Activated CD4-positive, alpha-beta T cell treated with anti-CD3 and anti-CD28 coated beads for 36 hours (primary cell): ENCODE measurements at regions of chr22 and their contacts with region 1.

Region 1: DNA sequence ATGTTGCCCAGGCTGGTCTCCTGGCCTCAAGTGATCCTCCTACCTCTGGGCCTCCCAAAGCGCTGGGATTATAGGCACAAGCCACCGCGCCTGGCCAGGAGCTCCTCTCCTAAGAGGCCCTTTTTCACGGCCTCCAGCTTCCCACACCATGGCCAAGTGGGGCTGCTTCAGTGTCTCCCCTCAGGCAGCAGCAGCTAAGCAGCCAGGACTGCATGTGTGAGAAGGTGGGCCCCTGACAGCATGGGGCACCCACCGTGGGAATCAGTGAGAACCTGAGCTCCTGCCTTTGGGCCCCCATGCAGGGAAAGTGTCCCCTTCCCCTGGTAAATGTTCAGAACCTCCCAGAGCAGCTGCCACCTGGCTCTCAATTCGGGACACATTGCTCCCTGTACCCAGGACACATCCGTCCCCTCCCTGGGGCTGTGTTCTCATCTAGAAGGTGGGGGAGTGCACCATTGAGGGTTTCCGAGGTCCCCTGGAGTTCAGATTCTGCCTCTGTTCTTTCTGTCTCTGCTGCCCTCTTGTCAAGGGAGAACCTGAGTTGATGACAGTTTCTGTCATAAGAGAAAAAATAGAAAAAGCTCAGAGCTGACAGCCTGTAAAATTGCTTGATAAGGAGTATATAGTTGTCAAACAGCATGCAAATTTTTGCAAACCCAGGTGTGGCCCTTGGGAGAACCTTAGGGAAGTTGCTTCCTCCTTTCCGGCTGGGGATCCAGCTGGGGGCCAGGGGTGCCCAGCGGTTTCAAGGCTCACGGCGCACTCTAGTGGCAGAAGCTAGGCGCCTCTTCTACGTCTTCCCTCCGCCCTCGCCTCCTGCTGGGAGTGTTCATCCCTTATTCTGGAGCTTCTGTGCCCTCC is 29.7 kb downstream of the FAM83F start:
- DNase-seq: peak; percentile 82
- ATAC-seq: peak; percentile 85
- H3K4me3 Mint-ChIP-seq: no peak overlapping the region
- H3K27ac Mint-ChIP-seq: no peak overlapping the region
- H3K4me1 Mint-ChIP-seq: no peaks in the 10 kb centered on the region
- H3K27me3 Mint-ChIP-seq: no peaks in the 10 kb centered on the region

Region 2: GRCh38 chr22:39537975-39538374 is 486.5 kb before region 1 on chr22:
- CTCF ChIA-PET with region 1: interaction called, 43 read pairs
- POLR2A ChIA-PET with region 1: no interaction called
- intact Hi-C with region 1: loop called (anchors 1 to 5 kb)
- DNase-seq: no peak
- ATAC-seq: no peak
- H3K4me3 Mint-ChIP-seq: no peak overlapping the region
- H3K27ac Mint-ChIP-seq: no peak overlapping the region
- H3K4me1 Mint-ChIP-seq: peaks cover 6% of the 10 kb centered on the region
- H3K27me3 Mint-ChIP-seq: no peaks in the 10 kb centered on the region

Region 3: GRCh38 chr22:39622881-39623367 is 401.5 kb before region 1 on chr22:
- CTCF ChIA-PET with region 1: interaction called, 3 read pairs
- POLR2A ChIA-PET with region 1: no interaction called
- intact Hi-C with region 1: loop called (anchors 1 to 10 kb)
- DNase-seq: peak; percentile 84
- ATAC-seq: peak; percentile 76
- H3K4me3 Mint-ChIP-seq: no peak overlapping the region
- H3K27ac Mint-ChIP-seq: no peak overlapping the region
- H3K4me1 Mint-ChIP-seq: peaks cover 12% of the 10 kb centered on the region
- H3K27me3 Mint-ChIP-seq: peaks cover 3% of the 10 kb centered on the region

Region 4: GRCh38 chr22:39833610-39834009 is 190.8 kb before region 1 on chr22:
- CTCF ChIA-PET with region 1: no interaction called
- POLR2A ChIA-PET with region 1: no interaction called
- intact Hi-C with region 1: no loop called
- DNase-seq: no peak
- ATAC-seq: no peak
- H3K4me3 Mint-ChIP-seq: no peak overlapping the region
- H3K27ac Mint-ChIP-seq: no peak overlapping the region
- H3K4me1 Mint-ChIP-seq: peaks cover 10% of the 10 kb centered on the region
- H3K27me3 Mint-ChIP-seq: peaks cover 2% of the 10 kb centered on the region

Region 5: GRCh38 chr22:39932918-39933649 is 91.3 kb before region 1 on chr22:
- CTCF ChIA-PET with region 1: interaction called, 15 read pairs
- POLR2A ChIA-PET with region 1: no interaction called
- intact Hi-C with region 1: loop called in 1 of 2 experiments (anchors 5 kb)
- DNase-seq: peak; percentile 83
- ATAC-seq: peak; percentile 35
- H3K4me3 Mint-ChIP-seq: peak overlapping the region; percentile 69
- H3K27ac Mint-ChIP-seq: peak overlapping the region; percentile 92
- H3K4me1 Mint-ChIP-seq: peaks cover 54% of the 10 kb centered on the region
- H3K27me3 Mint-ChIP-seq: no peaks in the 10 kb centered on the region

Region 6: DNA sequence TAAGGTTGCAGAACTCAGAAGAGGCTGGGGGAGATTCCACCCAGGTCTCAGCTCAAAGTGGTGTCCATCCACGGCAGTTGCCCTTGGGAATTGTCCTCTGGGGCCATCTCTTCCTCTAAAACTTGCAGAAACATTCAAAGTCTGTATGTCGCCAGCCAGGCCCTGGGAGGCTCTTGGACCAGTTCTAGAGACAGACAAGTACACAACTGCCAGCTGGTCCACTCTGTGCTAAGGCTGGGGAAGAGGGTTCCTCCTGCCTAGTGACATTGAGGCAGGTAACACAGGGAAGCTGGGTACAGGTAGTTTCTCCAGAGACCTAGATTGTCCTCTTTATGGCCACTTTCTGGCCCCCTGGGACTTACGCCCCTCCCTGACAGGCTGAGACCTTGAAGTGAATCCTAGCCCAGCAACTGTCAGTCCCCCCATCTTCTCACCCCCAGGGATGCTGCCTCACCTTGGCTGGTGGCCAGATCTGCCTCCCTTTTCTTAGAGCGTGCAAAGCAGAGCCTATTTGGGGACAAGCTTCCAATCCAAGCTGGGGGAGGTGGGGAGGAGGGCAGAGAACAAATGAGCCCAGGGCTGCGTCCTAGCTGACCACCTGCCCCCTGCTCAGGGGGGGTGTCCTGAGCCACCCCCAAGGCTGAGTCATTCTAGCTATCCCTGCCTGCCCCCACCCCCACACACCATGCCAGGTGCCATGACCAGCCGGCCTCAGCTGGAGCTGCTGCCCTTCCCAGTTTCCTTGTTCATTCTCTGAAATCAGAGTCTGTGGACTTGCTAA is 21.3 kb before region 1 on chr22:
- CTCF ChIA-PET with region 1: interaction called, 11 read pairs
- POLR2A ChIA-PET with region 1: no interaction called
- intact Hi-C with region 1: no loop called
- DNase-seq: no peak
- ATAC-seq: no peak
- H3K4me3 Mint-ChIP-seq: no peak overlapping the region
- H3K27ac Mint-ChIP-seq: no peak overlapping the region
- H3K4me1 Mint-ChIP-seq: no peaks in the 10 kb centered on the region
- H3K27me3 Mint-ChIP-seq: no peaks in the 10 kb centered on the region

Region 7: DNA sequence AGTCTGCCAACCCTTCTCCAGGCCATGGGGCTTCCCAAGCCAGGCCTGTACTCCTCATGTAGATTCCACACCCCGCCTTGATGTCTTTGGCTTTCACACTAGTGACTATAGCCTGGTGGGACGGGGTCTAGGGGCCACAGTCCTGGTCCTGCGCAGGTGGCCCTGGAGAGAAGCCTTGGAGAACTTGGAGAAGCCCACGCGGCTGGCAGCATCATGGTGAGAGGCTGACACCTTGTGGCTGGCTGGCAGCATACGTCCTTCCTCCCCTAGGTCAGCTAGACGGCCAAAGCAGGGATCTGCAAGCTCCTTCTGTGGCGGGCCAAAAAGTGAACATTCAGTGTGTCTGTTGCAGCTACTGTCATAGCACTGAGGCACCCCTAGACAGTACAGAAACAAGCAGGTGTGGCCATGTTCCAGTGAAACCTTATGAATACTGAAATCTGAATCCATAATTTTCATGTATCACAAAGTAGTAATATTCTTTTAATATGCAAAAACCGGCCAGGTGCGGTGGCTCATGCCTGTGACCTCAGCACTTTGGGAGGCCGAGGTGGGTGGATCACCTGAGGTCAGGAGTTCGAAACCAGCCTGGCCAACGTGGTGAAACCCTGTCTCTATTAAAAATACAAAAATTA is 12.3 kb after region 1 on chr22:
- CTCF ChIA-PET with region 1: interaction called, 13 read pairs
- POLR2A ChIA-PET with region 1: no interaction called
- intact Hi-C with region 1: no loop called
- DNase-seq: peak; percentile 79
- ATAC-seq: peak; percentile 90
- H3K4me3 Mint-ChIP-seq: no peak overlapping the region
- H3K27ac Mint-ChIP-seq: no peak overlapping the region
- H3K4me1 Mint-ChIP-seq: no peaks in the 10 kb centered on the region
- H3K27me3 Mint-ChIP-seq: peaks cover 2% of the 10 kb centered on the region